Naive thymus-derived CD4-positive, alpha-beta T cell (primary cell): ENCODE measurements at regions of chr1 and their contacts with region 1.

Region 1: GRCh38 chr1:107963601-107964335 is 1.2 kb downstream of the VAV3 start:
- DNase-seq: peak; percentile 27 to 70 (median 62)
- ATAC-seq: peak; percentile 79
- H3K4me3 ChIP-seq: peak overlapping the region; percentile 87
- H3K4me3 Mint-ChIP-seq: peak overlapping the region; percentile 91 to 99 (median 98)
- H3K27ac ChIP-seq: peak overlapping the region; percentile 67
- H3K27ac Mint-ChIP-seq: peak overlapping the region; percentile 79 to 98 (median 92)
- H3K4me1 ChIP-seq: peaks cover 11% of the 10 kb centered on the region in 2 donors
- H3K4me1 Mint-ChIP-seq: peaks cover 15 to 43% (median 27%) of the 10 kb centered on the region in 7 donors
- H3K27me3 ChIP-seq: no peaks in the 10 kb centered on the region
- H3K27me3 Mint-ChIP-seq: peaks cover 0 to 3% (median 0%) of the 10 kb centered on the region in 5 donors

Region 2: DNA sequence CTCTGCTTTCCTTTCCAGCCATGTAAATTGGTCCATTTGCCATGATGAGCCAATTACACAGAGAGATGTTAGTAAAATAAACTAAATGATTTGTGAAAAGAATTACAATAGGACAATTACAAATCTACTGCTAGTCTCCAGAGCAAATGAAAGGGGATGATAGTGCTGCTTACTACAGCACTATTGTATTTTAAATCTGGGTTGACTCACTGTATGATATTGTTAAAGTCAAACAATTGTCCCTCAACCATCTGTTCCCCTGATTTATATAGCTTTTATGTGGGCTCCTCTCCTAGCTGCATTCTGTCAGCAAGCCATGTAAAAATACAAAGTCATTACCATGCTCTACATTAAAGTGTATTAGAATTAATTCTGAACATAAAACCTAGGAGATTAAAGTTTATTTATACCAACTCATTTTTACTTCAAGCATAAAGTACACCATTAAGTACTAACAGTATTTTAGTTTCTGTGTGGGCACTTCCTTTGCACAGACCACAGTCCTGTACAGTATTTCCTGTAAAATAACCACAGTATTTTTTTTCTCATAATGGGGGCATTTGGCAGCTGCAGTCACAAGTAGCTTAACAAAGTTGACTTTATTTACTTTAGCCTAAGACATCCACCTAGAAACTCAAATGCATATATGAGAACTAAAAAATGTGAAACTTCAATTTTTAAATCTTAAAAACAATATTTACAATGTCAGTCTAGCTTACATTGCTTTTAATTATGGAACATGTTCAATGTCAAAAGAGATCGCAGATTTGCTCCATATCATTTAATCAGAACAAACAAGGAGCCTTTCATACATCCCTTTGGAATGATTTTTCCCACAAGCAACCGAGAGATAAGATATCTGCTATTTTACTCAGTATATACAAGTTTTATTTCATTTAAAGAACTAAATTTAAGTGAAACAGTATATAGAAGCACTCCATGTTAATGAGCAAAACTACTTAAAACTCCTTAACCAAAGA is 134.4 kb before region 1 on chr1:
- CTCF ChIA-PET with region 1: interaction called, 3 read pairs
- POLR2A ChIA-PET with region 1: no interaction called
- intact Hi-C with region 1: loop called in 1 of 2 experiments (anchors 2 kb)
- DNase-seq: no peak
- ATAC-seq: peak; percentile 80
- H3K4me3 ChIP-seq: no peak overlapping the region
- H3K4me3 Mint-ChIP-seq: peak overlapping the region in 8 of 10 donors; percentile 18 to 65 (median 42)
- H3K27ac ChIP-seq: no peak overlapping the region
- H3K27ac Mint-ChIP-seq: peak overlapping the region in 7 of 9 donors; percentile 25 to 56 (median 32)
- H3K4me1 ChIP-seq: peaks cover 9 to 38% of the 10 kb centered on the region in 2 donors
- H3K4me1 Mint-ChIP-seq: peaks cover 23 to 59% (median 27%) of the 10 kb centered on the region in 7 donors
- H3K27me3 ChIP-seq: no peaks in the 10 kb centered on the region
- H3K27me3 Mint-ChIP-seq: no peaks in the 10 kb centered on the region

Region 3: DNA sequence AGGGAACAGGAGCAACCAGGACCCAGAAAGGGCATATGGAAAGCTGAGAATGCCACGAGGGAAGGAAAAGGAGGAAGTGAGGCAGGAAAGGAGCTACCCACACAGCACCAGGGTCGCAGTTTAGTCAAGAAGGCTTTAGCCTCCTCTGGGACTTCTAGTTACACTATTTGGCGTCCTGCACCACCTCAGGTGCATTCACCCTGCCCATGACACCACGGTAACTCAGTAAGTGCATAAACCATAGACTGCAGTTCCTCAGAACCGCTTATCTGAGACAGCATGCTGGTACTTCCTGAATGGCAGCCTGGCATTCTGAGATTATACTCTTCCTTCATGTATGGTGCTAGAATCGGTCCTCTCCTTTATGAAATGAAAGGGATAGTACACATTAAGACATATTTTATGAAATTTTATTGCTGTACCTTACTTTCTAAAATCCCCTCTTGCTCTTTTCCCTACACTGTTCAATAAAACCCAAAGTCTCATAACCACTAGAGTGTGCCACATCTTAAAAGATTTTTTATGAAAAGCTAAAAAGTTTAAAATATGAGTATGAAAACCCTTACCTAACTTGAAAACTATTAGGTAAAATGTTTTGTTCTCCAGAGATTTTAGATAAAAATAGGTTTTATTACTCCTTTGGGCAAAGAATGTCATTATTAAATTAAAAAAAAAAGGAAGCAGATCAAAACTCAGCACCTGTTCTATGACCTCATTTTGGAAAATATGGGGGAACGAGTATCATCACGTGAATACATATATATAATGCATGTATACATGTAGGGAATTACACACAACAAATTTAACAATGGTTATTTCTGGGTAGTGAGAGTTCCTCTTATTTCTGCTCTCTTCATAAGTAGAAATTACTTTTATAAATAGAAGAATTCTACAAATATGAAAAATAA is 66.1 kb before region 1 on chr1:
- CTCF ChIA-PET with region 1: no interaction called
- POLR2A ChIA-PET with region 1: no interaction called
- intact Hi-C with region 1: loop called in 1 of 2 experiments (anchors 2 kb)
- DNase-seq: peak in 5 of 9 donors; percentile 4 to 15 (median 10)
- ATAC-seq: peak; percentile 84
- H3K4me3 ChIP-seq: no peak overlapping the region
- H3K4me3 Mint-ChIP-seq: peak overlapping the region in 9 of 10 donors; percentile 22 to 81 (median 60)
- H3K27ac ChIP-seq: no peak overlapping the region
- H3K27ac Mint-ChIP-seq: peak overlapping the region in 8 of 9 donors; percentile 2 to 87 (median 54)
- H3K4me1 ChIP-seq: peaks cover 8 to 14% of the 10 kb centered on the region in 2 donors
- H3K4me1 Mint-ChIP-seq: peaks cover 21 to 59% (median 45%) of the 10 kb centered on the region in 7 donors
- H3K27me3 ChIP-seq: no peaks in the 10 kb centered on the region
- H3K27me3 Mint-ChIP-seq: no peaks in the 10 kb centered on the region

Region 4: DNA sequence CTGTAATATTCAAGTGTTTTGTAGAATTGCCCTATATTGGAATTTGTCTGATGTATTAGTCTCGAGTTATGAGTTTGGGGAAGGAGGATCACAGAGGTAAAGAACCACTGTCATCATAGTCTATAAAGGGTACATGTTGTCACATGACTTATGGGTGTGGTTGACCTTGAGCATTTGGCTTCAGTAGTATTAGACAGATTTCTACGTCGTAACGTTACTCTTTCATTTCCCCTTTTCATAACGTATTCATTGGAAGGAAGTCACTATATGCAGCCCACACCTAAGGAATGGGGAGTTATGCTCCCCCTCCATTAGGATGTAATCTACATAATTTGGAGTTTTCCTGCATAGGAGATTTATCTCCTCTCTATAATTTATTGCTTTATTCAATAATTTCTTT is 111.3 kb after region 1 on chr1:
- CTCF ChIA-PET with region 1: interaction called, 5 read pairs
- POLR2A ChIA-PET with region 1: interaction called, 4 read pairs
- intact Hi-C with region 1: loop called in 1 of 2 experiments (anchors 1 kb)
- DNase-seq: no peak
- ATAC-seq: peak; percentile 58
- H3K4me3 ChIP-seq: no peak overlapping the region
- H3K4me3 Mint-ChIP-seq: no peak overlapping the region
- H3K27ac ChIP-seq: no peak overlapping the region
- H3K27ac Mint-ChIP-seq: peak overlapping the region in 2 of 9 donors; percentile 21 to 78
- H3K4me1 ChIP-seq: peaks cover 28 to 37% of the 10 kb centered on the region in 2 donors
- H3K4me1 Mint-ChIP-seq: peaks cover 24 to 60% (median 47%) of the 10 kb centered on the region in 7 donors
- H3K27me3 ChIP-seq: no peaks in the 10 kb centered on the region
- H3K27me3 Mint-ChIP-seq: no peaks in the 10 kb centered on the region

Region 5: GRCh38 chr1:108199781-108200570 is 236.2 kb after region 1 on chr1 and contains the start of gene SLC25A24:
- CTCF ChIA-PET with region 1: no interaction called
- POLR2A ChIA-PET with region 1: interaction called, 5 read pairs
- intact Hi-C with region 1: loop called (anchors 2 kb)
- DNase-seq: peak; percentile 58 to 83 (median 71)
- ATAC-seq: peak; percentile 96
- H3K4me3 ChIP-seq: peak within 1 kb of the TSS; percentile 75
- H3K4me3 Mint-ChIP-seq: peak within 1 kb of the TSS; percentile 69 to 93 (median 88)
- H3K27ac ChIP-seq: peak within 1 kb of the TSS; percentile 65
- H3K27ac Mint-ChIP-seq: peak within 1 kb of the TSS; percentile 52 to 87 (median 82)
- H3K4me1 ChIP-seq: peaks cover 3 to 16% of the 10 kb centered on the region in 2 donors
- H3K4me1 Mint-ChIP-seq: peaks cover 18 to 42% (median 30%) of the 10 kb centered on the region in 7 donors
- H3K27me3 ChIP-seq: no peaks in the 10 kb centered on the region
- H3K27me3 Mint-ChIP-seq: peaks cover 0 to 18% (median 0%) of the 10 kb centered on the region in 5 donors
- total RNA-seq, gene SLC25A24: 7.1 to 27.2 (median 10.2) TPM